Left lung (tissue), 14 donors: ENCODE measurements at regions of chr5 and their contacts with region 1.

Region 1: GRCh38 chr5:43040287-43041098 is at the start of gene ANXA2R:
- DNase-seq: peak; percentile 80 to 90 (median 89)
- ATAC-seq: peak; percentile 78
- H3K4me3 ChIP-seq: peak within 1 kb of the TSS; percentile 45 to 56
- H3K27ac ChIP-seq: peak within 1 kb of the TSS; percentile 97 to 100
- H3K4me1 ChIP-seq: peaks cover 0 to 39% of the 10 kb centered on the region in 2 donors
- H3K27me3 ChIP-seq: peaks cover 0 to 40% of the 10 kb centered on the region in 2 donors
- CTCF ChIP-seq: peak; percentile 81 to 87
- polyA plus RNA-seq, gene ANXA2R: 1.5 to 2.3 (median 1.8) TPM

Region 2: DNA sequence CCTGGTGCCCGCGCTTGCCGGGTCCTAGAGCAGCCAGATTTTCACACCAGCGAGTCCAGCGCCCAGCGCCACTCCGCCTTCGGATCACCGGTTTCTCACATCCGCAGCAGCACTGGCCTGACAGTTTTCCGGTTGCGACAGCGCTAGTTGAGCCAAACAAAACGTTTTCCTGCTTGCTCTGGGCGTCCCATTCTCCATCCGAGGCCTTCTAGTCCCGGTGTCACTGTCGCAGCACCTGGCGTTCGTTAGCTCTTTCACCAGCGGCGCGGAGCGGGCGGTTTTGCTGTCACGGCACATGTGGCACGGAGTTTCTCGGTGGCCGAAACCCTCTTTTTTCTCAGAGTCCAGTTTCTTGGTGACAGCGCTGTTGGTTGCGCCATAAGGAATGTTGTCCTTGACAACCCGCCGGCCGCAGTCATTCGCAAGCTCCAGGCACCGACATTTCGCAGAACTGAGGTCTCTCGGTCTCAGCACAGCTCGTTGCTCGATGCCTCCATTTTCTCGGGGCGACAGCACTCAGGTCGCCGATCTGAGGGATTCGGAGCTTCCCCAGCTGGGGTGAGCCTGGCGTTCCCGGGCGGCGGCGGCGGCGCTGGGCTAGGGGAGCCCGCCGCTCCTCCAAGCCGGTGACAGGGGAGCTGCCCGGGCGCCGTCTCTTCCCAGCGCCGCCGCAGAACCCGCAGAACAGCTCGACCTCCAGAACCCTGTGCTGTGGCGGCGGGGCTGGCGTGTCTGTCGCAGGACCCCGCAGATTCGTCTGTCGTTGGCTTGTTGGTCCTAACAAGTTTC is 48.2 kb before region 1 on chr5:
- intact Hi-C with region 1: loop called in 1 of 2 experiments (anchors 2 kb)
- DNase-seq: peak; percentile 70 to 92 (median 82)
- ATAC-seq: peak; percentile 55
- H3K4me3 ChIP-seq: peak overlapping the region; percentile 33 to 54
- H3K27ac ChIP-seq: peak overlapping the region; percentile 96 to 100
- H3K4me1 ChIP-seq: peaks cover 0 to 33% of the 10 kb centered on the region in 2 donors
- H3K27me3 ChIP-seq: peaks cover 39 to 84% of the 10 kb centered on the region in 2 donors
- CTCF ChIP-seq: no peak

Region 3: GRCh38 chr5:43225649-43226245 is 185.3 kb after region 1 on chr5:
- intact Hi-C with region 1: no loop called
- DNase-seq: no peak
- ATAC-seq: no peak
- H3K4me3 ChIP-seq: no peak overlapping the region
- H3K27ac ChIP-seq: no peak overlapping the region
- H3K4me1 ChIP-seq: no peaks in the 10 kb centered on the region
- H3K27me3 ChIP-seq: no peaks in the 10 kb centered on the region
- CTCF ChIP-seq: no peak